ENCODE measurements at regions of chr16 and their contacts with region 1.

Region 1: GRCh38 chr16:18945233-18945632 is 19.0 kb upstream of the SMG1 start:
- DNase-seq: no peak
- H3K4me3 Mint-ChIP-seq: no peak overlapping the region
- H3K27ac Mint-ChIP-seq: no peak overlapping the region
- H3K4me1 Mint-ChIP-seq: peaks cover 11% of the 10 kb centered on the region
- H3K27me3 Mint-ChIP-seq: no peaks in the 10 kb centered on the region

Region 2: GRCh38 chr16:18969050-18969854 is 24.0 kb after region 1 on chr16:
- CTCF ChIA-PET with region 1: interaction called, 5 read pairs
- intact Hi-C with region 1: loop called (anchors 2 kb)
- DNase-seq: peak; percentile 89
- H3K4me3 Mint-ChIP-seq: peak overlapping the region; percentile 23
- H3K27ac Mint-ChIP-seq: no peak overlapping the region
- H3K4me1 Mint-ChIP-seq: peaks cover 6% of the 10 kb centered on the region
- H3K27me3 Mint-ChIP-seq: no peaks in the 10 kb centered on the region

Region 3: DNA sequence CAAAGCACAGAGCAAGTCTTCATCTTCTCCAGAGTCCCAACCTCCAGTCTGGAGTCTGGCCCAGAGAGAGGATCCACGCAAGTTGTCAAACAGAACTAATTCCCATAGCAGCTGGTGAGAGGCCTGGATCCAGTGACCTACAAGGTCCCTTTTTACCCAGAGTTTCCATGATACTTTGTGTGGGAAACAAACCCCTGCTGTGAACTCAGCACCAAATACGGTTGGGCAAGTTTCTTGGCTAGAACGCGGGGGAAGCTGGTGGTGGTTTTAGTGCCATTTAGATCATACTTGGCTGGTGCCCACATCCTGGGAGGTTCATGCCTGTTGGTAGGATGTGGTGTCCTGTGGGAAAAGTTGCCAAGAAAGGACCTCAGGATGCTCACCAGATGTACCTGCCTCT is 56.6 kb after region 1 on chr16:
- CTCF ChIA-PET with region 1: no interaction called
- intact Hi-C with region 1: no loop called
- DNase-seq: no peak
- H3K4me3 Mint-ChIP-seq: no peak overlapping the region
- H3K27ac Mint-ChIP-seq: no peak overlapping the region
- H3K4me1 Mint-ChIP-seq: no peaks in the 10 kb centered on the region
- H3K27me3 Mint-ChIP-seq: peaks cover 3% of the 10 kb centered on the region

Region 4: DNA sequence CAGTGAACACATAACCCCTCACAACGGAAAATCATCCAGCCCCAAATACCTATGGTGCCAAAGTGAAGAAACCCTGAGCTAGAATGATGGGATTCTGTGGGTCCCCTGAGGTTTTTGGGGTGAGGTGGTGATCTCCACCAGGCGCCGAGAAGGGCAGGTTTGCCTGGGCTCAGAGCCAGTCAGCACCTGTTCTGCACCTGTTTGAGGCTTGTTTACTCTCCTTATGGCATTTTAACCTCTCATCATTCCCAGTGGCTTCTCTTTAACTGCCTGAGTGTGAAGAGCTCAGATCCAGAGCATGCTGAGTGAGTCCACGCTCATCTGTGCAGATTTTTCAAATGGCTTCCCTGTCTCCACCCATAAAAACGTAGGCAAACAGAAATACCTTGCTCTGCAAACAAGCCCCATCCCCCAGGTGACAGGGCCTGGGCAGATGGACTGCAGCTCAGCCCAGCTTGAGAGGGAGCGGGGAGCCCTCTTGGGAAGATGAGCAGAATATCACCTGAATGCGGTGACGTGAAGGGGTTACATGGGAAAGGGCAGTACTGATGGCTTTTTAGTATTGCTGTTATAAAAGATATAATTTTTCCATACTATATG is 300.2 kb after region 1 on chr16:
- CTCF ChIA-PET with region 1: no interaction called
- intact Hi-C with region 1: no loop called
- DNase-seq: no peak
- H3K4me3 Mint-ChIP-seq: no peak overlapping the region
- H3K27ac Mint-ChIP-seq: no peak overlapping the region
- H3K4me1 Mint-ChIP-seq: no peaks in the 10 kb centered on the region
- H3K27me3 Mint-ChIP-seq: no peaks in the 10 kb centered on the region